GM12878 (cell line): ENCODE measurements at regions of chr19 and their contacts with region 1.

Region 1: DNA sequence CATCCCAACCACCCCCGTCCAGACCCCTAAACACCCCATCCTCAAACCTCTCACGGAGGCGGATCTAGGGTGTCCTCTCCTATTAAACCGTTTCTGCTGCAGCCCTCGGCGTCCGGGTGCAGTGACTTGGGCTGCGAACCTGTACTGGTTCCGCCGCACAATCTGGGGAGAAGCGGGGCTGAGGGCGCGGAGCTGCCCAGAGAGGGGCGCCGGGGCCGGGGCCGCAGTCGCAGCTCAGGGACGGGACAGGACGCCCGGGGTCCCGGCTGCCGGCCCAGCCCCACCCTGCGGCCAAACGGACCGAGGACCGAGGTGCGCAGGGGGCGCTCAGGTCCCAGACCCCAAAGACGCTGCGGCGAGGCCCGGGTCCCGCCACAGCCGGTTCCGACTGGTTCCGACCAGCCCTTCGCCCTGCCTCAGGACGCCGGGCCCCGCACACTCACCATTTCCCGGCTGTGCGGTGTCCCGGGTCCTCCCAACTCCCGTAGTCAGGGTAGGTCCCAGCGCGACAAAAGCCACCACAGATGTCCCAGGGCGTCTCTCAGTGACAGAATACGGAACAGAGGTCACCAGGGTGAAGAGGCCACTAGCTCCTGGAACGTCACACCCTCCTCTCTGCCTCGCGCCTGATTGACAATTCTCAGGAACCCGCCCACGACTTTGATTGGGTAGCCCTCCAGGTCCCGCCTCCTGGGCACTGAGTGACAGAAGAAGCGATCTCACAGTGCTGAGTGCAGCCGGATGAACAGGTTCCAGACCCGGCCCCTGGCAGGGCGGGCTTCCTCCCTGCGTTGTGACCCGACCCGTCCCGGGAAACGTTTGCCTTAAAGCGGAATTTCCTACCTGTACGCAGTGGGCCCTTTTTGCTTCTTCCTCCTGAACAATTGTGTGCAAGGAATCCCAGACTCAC is at the start of gene ZNF44:
- DNase-seq: peak; percentile 95
- ATAC-seq: peak; percentile 96
- H3K4me3 ChIP-seq: peak within 1 kb of the TSS; percentile 82
- H3K27ac ChIP-seq: peak within 1 kb of the TSS; percentile 88
- H3K4me1 ChIP-seq: 0 out of 2 replicates have a peak, but pooled peaks cover 5% of the 10 kb centered on the region
- H3K27me3 ChIP-seq: no peaks in the 10 kb centered on the region
- CTCF ChIP-seq: no peak
- EP300 ChIP-seq: no peak
- POLR2A ChIP-seq: peak; percentile 92
- RAD21 ChIP-seq: no peak
- polyA plus RNA-seq, gene ZNF44: 4.0 to 4.5 TPM

Region 2: GRCh38 chr19:12162882-12163806 is 131.4 kb before region 1 on chr19 and contains the start of gene ZNF136:
- CTCF ChIA-PET with region 1: no interaction called
- POLR2A ChIA-PET with region 1: no interaction called
- RAD21 ChIA-PET with region 1: interaction called, 4 read pairs
- SMC1A ChIA-PET with region 1: interaction called, 3 read pairs
- in situ Hi-C with region 1: no loop called
- intact Hi-C with region 1: loop called (anchors 10 kb)
- DNase-seq: peak; percentile 80
- ATAC-seq: peak; percentile 100
- H3K4me3 ChIP-seq: peak within 1 kb of the TSS; percentile 95
- H3K27ac ChIP-seq: peak within 1 kb of the TSS; percentile 84
- H3K4me1 ChIP-seq: no peaks in the 10 kb centered on the region
- H3K27me3 ChIP-seq: no peaks in the 10 kb centered on the region
- CTCF ChIP-seq: no peak
- EP300 ChIP-seq: no peak
- POLR2A ChIP-seq: peak; percentile 94
- RAD21 ChIP-seq: no peak
- polyA plus RNA-seq, gene ZNF136: 2.8 to 3.1 TPM

Region 3: GRCh38 chr19:12205296-12205695 is 89.2 kb before region 1 on chr19:
- CTCF ChIA-PET with region 1: no interaction called
- POLR2A ChIA-PET with region 1: no interaction called
- RAD21 ChIA-PET with region 1: no interaction called
- SMC1A ChIA-PET with region 1: no interaction called
- in situ Hi-C with region 1: no loop called
- intact Hi-C with region 1: no loop called
- DNase-seq: no peak
- ATAC-seq: no peak
- H3K4me3 ChIP-seq: no peak overlapping the region
- H3K27ac ChIP-seq: no peak overlapping the region
- H3K4me1 ChIP-seq: no peaks in the 10 kb centered on the region
- H3K27me3 ChIP-seq: no peaks in the 10 kb centered on the region
- CTCF ChIP-seq: no peak
- EP300 ChIP-seq: no peak
- POLR2A ChIP-seq: no peak
- RAD21 ChIP-seq: no peak